Naive thymus-derived CD4-positive, alpha-beta T cell (primary cell): ENCODE measurements at regions of chr5 and their contacts with region 1.

Region 1: GRCh38 chr5:82356808-82357671 is 78.9 kb upstream of the RPS23 start:
- DNase-seq: peak; percentile 26 to 87 (median 83)
- ATAC-seq: peak; percentile 90
- H3K4me3 ChIP-seq: peak overlapping the region; percentile 15
- H3K4me3 Mint-ChIP-seq: peak overlapping the region; percentile 74 to 90 (median 82)
- H3K27ac ChIP-seq: peak overlapping the region; percentile 60
- H3K27ac Mint-ChIP-seq: peak overlapping the region; percentile 87 to 98 (median 97)
- H3K4me1 ChIP-seq: peaks cover 17 to 19% of the 10 kb centered on the region in 2 donors
- H3K4me1 Mint-ChIP-seq: peaks cover 19 to 78% (median 23%) of the 10 kb centered on the region in 7 donors
- H3K27me3 ChIP-seq: no peaks in the 10 kb centered on the region
- H3K27me3 Mint-ChIP-seq: no peaks in the 10 kb centered on the region

Region 2: GRCh38 chr5:81842879-81843301 is 514.1 kb before region 1 on chr5:
- CTCF ChIA-PET with region 1: no interaction called
- POLR2A ChIA-PET with region 1: no interaction called
- intact Hi-C with region 1: no loop called
- DNase-seq: no peak
- ATAC-seq: no peak
- H3K4me3 ChIP-seq: no peak overlapping the region
- H3K4me3 Mint-ChIP-seq: no peak overlapping the region
- H3K27ac ChIP-seq: no peak overlapping the region
- H3K27ac Mint-ChIP-seq: no peak overlapping the region
- H3K4me1 ChIP-seq: peaks cover 0 to 8% of the 10 kb centered on the region in 2 donors
- H3K4me1 Mint-ChIP-seq: peaks cover 3 to 12% (median 8%) of the 10 kb centered on the region in 7 donors
- H3K27me3 ChIP-seq: no peaks in the 10 kb centered on the region
- H3K27me3 Mint-ChIP-seq: peaks cover 0 to 6% (median 0%) of the 10 kb centered on the region in 5 donors

Region 3: GRCh38 chr5:82375531-82376244 is 18.6 kb after region 1 on chr5:
- CTCF ChIA-PET with region 1: no interaction called
- POLR2A ChIA-PET with region 1: no interaction called
- intact Hi-C with region 1: loop called in 1 of 2 experiments (anchors 2 kb)
- DNase-seq: no peak
- ATAC-seq: no peak
- H3K4me3 ChIP-seq: no peak overlapping the region
- H3K4me3 Mint-ChIP-seq: no peak overlapping the region
- H3K27ac ChIP-seq: no peak overlapping the region
- H3K27ac Mint-ChIP-seq: peak overlapping the region in 1 of 9 donors; percentile 19
- H3K4me1 ChIP-seq: no peaks in the 10 kb centered on the region
- H3K4me1 Mint-ChIP-seq: peaks cover 0 to 20% (median 0%) of the 10 kb centered on the region in 7 donors
- H3K27me3 ChIP-seq: no peaks in the 10 kb centered on the region
- H3K27me3 Mint-ChIP-seq: peaks cover 0 to 11% (median 4%) of the 10 kb centered on the region in 5 donors

Region 4: GRCh38 chr5:82425591-82425990 is 68.6 kb after region 1 on chr5:
- CTCF ChIA-PET with region 1: no interaction called
- POLR2A ChIA-PET with region 1: interaction called, 3 read pairs
- intact Hi-C with region 1: loop called in 1 of 2 experiments (anchors 5 kb)
- DNase-seq: no peak
- ATAC-seq: no peak
- H3K4me3 ChIP-seq: no peak overlapping the region
- H3K4me3 Mint-ChIP-seq: no peak overlapping the region
- H3K27ac ChIP-seq: no peak overlapping the region
- H3K27ac Mint-ChIP-seq: no peak overlapping the region
- H3K4me1 ChIP-seq: no peaks in the 10 kb centered on the region
- H3K4me1 Mint-ChIP-seq: peaks cover 0 to 7% (median 0%) of the 10 kb centered on the region in 7 donors
- H3K27me3 ChIP-seq: no peaks in the 10 kb centered on the region
- H3K27me3 Mint-ChIP-seq: peaks cover 0 to 4% (median 0%) of the 10 kb centered on the region in 5 donors

Region 5: GRCh38 chr5:82620957-82621600 is 264.0 kb after region 1 on chr5:
- CTCF ChIA-PET with region 1: no interaction called
- POLR2A ChIA-PET with region 1: no interaction called
- intact Hi-C with region 1: loop called in 1 of 2 experiments (anchors 2 kb)
- DNase-seq: no peak
- ATAC-seq: no peak
- H3K4me3 ChIP-seq: no peak overlapping the region
- H3K4me3 Mint-ChIP-seq: peak overlapping the region in 1 of 10 donors; percentile 55
- H3K27ac ChIP-seq: no peak overlapping the region
- H3K27ac Mint-ChIP-seq: peak overlapping the region in 1 of 9 donors; percentile 78
- H3K4me1 ChIP-seq: no peaks in the 10 kb centered on the region
- H3K4me1 Mint-ChIP-seq: peaks cover 0 to 7% (median 0%) of the 10 kb centered on the region in 7 donors
- H3K27me3 ChIP-seq: no peaks in the 10 kb centered on the region
- H3K27me3 Mint-ChIP-seq: peaks cover 0 to 8% (median 0%) of the 10 kb centered on the region in 5 donors

Region 6: DNA sequence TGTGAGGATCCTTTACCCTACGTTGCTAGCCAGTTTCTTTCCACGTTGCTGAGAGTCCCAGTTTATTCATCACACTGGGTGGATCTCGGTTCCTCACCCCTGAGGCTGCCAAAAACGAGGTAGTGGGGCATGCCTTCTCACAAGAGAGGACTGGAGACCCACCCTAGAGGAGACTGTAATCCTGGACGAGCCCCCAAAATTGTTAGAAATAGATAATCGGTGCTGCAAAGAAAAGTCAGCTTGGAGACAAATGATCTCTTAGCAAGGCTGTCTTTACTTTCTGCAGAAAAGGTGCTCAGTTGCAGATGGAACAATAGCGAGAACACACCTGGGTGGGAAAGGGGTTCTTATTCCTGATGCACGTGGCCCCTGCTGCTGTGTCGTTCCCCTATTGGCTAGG is 618.4 kb after region 1 on chr5:
- CTCF ChIA-PET with region 1: no interaction called
- POLR2A ChIA-PET with region 1: no interaction called
- intact Hi-C with region 1: no loop called
- DNase-seq: no peak
- ATAC-seq: no peak
- H3K4me3 ChIP-seq: no peak overlapping the region
- H3K4me3 Mint-ChIP-seq: no peak overlapping the region
- H3K27ac ChIP-seq: no peak overlapping the region
- H3K27ac Mint-ChIP-seq: no peak overlapping the region
- H3K4me1 ChIP-seq: no peaks in the 10 kb centered on the region
- H3K4me1 Mint-ChIP-seq: no peaks in the 10 kb centered on the region
- H3K27me3 ChIP-seq: no peaks in the 10 kb centered on the region
- H3K27me3 Mint-ChIP-seq: peaks cover 0 to 24% (median 15%) of the 10 kb centered on the region in 5 donors

Region 7: GRCh38 chr5:83076742-83077661 is 720.0 kb after region 1 on chr5 and contains the starts of genes TMEM167A and XRCC4:
- CTCF ChIA-PET with region 1: no interaction called
- POLR2A ChIA-PET with region 1: no interaction called
- intact Hi-C with region 1: loop called (anchors 1 kb)
- DNase-seq: peak; percentile 71 to 97 (median 94)
- ATAC-seq: peak; percentile 99
- H3K4me3 ChIP-seq: peak within 1 kb of the TSS; percentile 78
- H3K4me3 Mint-ChIP-seq: peak within 1 kb of the TSS; percentile 93 to 99 (median 98)
- H3K27ac ChIP-seq: peak within 1 kb of the TSS; percentile 83
- H3K27ac Mint-ChIP-seq: peak within 1 kb of the TSS; percentile 95 to 99 (median 97)
- H3K4me1 ChIP-seq: peaks cover 5 to 16% of the 10 kb centered on the region in 2 donors
- H3K4me1 Mint-ChIP-seq: peaks cover 35 to 65% (median 62%) of the 10 kb centered on the region in 7 donors
- H3K27me3 ChIP-seq: no peaks in the 10 kb centered on the region
- H3K27me3 Mint-ChIP-seq: no peaks in the 10 kb centered on the region
- total RNA-seq, gene TMEM167A: 39.5 to 73.4 (median 42.3) TPM
- total RNA-seq, gene XRCC4: 2.9 to 7.4 (median 4.7) TPM